Activated B cell treated with CpG ODN at 0.5 μM for 24 hours (primary cell): ENCODE measurements at regions of chr19 and their contacts with region 1.

Region 1: DNA sequence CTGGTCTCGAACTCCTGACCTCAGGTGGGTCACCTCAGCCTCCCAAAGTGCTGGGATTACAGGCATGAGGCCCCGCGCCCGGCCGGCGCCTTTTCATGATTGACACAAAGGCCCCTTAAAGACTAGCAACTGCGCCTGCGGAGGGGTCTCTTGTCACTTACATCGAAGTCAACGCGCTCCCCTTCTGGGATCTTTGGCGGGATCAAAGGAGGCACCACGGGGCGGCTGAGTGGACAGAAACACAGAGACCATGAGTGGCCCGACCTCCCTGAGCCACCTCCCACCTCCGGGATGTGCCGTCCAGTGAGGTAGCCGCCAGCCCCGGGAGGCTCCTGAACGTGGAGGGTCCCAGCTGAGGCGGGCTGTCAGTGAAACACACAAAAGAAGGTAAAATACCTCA is 7.3 kb downstream of the TNNT1 start:
- DNase-seq: no peak
- ATAC-seq: no peak
- H3K4me3 Mint-ChIP-seq: no peak overlapping the region
- H3K27ac Mint-ChIP-seq: no peak overlapping the region
- H3K4me1 Mint-ChIP-seq: peaks cover 6% of the 10 kb centered on the region
- H3K27me3 Mint-ChIP-seq: peaks cover 51% of the 10 kb centered on the region
- CTCF ChIP-seq: no peak

Region 2: GRCh38 chr19:55160128-55160985 is 18.7 kb after region 1 on chr19:
- CTCF ChIA-PET with region 1: no interaction called
- POLR2A ChIA-PET with region 1: no interaction called
- intact Hi-C with region 1: no loop called
- DNase-seq: peak; percentile 70
- ATAC-seq: peak; percentile 97
- H3K4me3 Mint-ChIP-seq: no peak overlapping the region
- H3K27ac Mint-ChIP-seq: no peak overlapping the region
- H3K4me1 Mint-ChIP-seq: peaks cover 6% of the 10 kb centered on the region
- H3K27me3 Mint-ChIP-seq: peaks cover 49% of the 10 kb centered on the region
- CTCF ChIP-seq: peak; percentile 35

Region 3: DNA sequence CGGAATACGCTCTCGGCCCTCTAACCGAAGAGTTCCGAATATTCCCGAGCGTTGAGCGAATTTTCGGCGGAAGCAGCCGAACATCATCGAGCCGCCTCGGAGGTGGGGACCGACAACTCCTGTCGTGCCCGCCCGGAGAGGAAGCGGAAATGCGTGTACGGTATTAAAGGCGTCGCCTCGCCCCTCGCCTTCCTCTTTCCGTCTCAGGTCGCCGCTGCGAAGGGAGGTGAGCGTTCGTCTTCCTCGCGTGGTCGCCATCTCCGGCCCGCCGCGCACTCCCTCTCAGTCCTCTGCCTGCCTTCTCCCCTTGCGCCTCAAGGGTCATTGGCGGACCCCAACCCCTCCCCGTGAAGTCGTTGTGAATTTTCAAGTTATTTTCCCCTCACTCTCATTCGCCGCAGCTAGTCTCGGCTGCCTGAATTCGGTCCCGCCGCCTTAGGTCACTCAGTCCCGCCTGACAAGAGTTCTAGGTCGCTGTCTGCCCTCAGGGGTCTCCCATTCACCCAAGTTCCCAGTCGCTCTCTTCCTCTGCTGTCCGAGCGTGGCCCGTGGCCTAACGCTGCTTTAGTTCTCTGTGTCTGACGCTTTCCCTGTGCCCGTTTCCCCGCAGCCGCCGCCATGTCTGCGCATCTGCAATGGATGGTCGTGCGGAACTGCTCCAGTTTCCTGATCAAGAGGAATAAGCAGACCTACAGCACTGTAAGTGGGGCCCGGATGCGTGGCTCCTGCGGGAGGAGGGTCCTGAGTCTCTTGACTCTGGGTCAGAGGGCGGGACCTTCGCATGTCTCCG is 244.2 kb after region 1 on chr19 and contains the start of gene RPL28:
- CTCF ChIA-PET with region 1: interaction called, 13 read pairs
- POLR2A ChIA-PET with region 1: interaction called, 3 read pairs
- intact Hi-C with region 1: no loop called
- DNase-seq: peak; percentile 95
- ATAC-seq: peak; percentile 79
- H3K4me3 Mint-ChIP-seq: peak within 1 kb of the TSS; percentile 100
- H3K27ac Mint-ChIP-seq: peak within 1 kb of the TSS; percentile 99
- H3K4me1 Mint-ChIP-seq: peaks cover 67% of the 10 kb centered on the region
- H3K27me3 Mint-ChIP-seq: no peaks in the 10 kb centered on the region
- CTCF ChIP-seq: no peak
- total RNA-seq, gene RPL28: 3,790 and 4,042 TPM in 2 replicates

Region 4: DNA sequence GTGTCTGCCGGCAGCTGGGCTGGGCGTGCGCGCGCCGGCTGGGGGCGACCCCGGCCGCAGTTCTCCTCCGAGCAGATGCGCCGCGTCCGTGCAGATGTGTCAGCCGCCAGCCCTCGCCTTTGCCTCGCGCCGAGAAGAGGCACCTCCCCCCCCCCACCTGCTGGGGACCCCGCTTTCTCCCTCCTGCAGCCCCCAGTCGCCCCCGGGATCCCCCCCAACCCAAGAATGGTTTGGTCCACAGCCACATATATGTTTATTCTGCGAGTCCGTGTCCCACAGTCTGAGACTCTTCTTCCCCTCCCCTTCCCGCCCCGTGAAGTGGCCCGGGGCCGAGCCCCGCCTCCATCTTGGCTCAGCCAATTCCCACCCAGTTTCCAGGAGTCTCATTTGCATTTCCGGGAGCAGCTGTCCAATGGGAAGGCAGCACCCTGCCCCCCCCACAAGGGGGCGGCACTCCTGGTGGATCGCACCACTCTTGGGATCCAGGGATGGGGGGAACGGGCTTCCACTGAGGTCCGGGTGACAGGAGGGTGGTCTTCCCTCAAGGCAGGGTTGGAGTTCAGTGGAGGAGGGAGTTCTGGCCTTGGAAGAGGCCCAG is 311.2 kb after region 1 on chr19:
- CTCF ChIA-PET with region 1: interaction called, 4 read pairs
- POLR2A ChIA-PET with region 1: no interaction called
- intact Hi-C with region 1: loop called (anchors 1 kb)
- DNase-seq: no peak
- ATAC-seq: no peak
- H3K4me3 Mint-ChIP-seq: no peak overlapping the region
- H3K27ac Mint-ChIP-seq: no peak overlapping the region
- H3K4me1 Mint-ChIP-seq: peaks cover 20% of the 10 kb centered on the region
- H3K27me3 Mint-ChIP-seq: peaks cover 11% of the 10 kb centered on the region
- CTCF ChIP-seq: no peak